GM12878 (cell line): ENCODE measurements at regions of chr6 and their contacts with region 1.

Region 1: GRCh38 chr6:25042036-25042521 is 106.3 kb upstream of the RIPOR2 start:
- DNase-seq: no peak
- ATAC-seq: peak; percentile 62
- H3K4me3 ChIP-seq: peak overlapping the region; percentile 67
- H3K27ac ChIP-seq: peak overlapping the region; percentile 60
- H3K4me1 ChIP-seq: peaks cover 23% of the 10 kb centered on the region
- H3K27me3 ChIP-seq: no peaks in the 10 kb centered on the region
- CTCF ChIP-seq: no peak
- EP300 ChIP-seq: no peak
- POLR2A ChIP-seq: peak; percentile 50; the same call in 1 of the 2 replicates
- RAD21 ChIP-seq: no peak

Region 2: DNA sequence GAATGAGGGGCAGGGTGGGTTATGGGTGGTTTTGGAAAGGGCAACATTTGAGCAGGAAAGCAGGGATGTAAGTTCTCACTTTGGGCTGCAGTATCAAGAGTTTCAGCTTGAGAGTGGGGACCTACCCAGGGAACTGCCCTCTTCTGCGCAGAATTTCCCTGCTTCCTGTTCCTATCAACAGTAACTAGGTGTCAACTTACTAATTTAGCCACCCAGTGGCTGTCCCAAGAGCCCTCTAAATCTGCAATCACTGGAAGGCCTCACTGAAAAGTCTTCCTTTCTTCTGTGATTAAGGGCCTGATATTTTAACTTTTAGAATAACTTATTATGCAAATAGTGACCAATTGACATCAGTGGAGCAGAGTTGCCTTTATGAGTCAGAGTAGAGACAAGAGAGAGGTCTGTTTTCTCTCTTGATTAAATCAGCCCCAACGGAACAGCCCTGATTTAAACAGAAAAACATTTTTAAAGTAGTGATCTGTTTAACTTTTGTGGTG is 11.8 kb after region 1 on chr6:
- CTCF ChIA-PET with region 1: interaction called, 91 read pairs
- POLR2A ChIA-PET with region 1: interaction called, 87 read pairs
- RAD21 ChIA-PET with region 1: interaction called, 63 read pairs
- SMC1A ChIA-PET with region 1: interaction called, 304 read pairs
- in situ Hi-C with region 1: no loop called
- intact Hi-C with region 1: no loop called
- DNase-seq: no peak
- ATAC-seq: peak; percentile 93
- H3K4me3 ChIP-seq: no peak overlapping the region
- H3K27ac ChIP-seq: peak overlapping the region; percentile 41
- H3K4me1 ChIP-seq: peaks cover 26% of the 10 kb centered on the region
- H3K27me3 ChIP-seq: no peaks in the 10 kb centered on the region
- CTCF ChIP-seq: peak in 2 of 3 experiments; percentile 16 to 20; a peak in 2 of 6 replicates
- EP300 ChIP-seq: peak in 1 of 2 experiments; percentile 29; a peak in 1 of 4 replicates
- POLR2A ChIP-seq: no peak
- RAD21 ChIP-seq: peak; percentile 21; the same call in 1 of the 2 replicates

Region 3: GRCh38 chr6:25061289-25061936 is 19.3 kb after region 1 on chr6:
- CTCF ChIA-PET with region 1: interaction called, 91 read pairs
- POLR2A ChIA-PET with region 1: interaction called, 87 read pairs
- RAD21 ChIA-PET with region 1: interaction called, 52 read pairs
- SMC1A ChIA-PET with region 1: interaction called, 304 read pairs
- in situ Hi-C with region 1: no loop called
- intact Hi-C with region 1: no loop called
- DNase-seq: no peak
- ATAC-seq: no peak
- H3K4me3 ChIP-seq: no peak overlapping the region
- H3K27ac ChIP-seq: no peak overlapping the region
- H3K4me1 ChIP-seq: no peaks in the 10 kb centered on the region
- H3K27me3 ChIP-seq: no peaks in the 10 kb centered on the region
- CTCF ChIP-seq: no peak
- EP300 ChIP-seq: no peak
- POLR2A ChIP-seq: no peak
- RAD21 ChIP-seq: no peak